ENCODE measurements at regions of chr6 and their contacts with region 1.

Region 1: GRCh38 chr6:17281100-17281494 is at the start of gene RBM24:
- DNase-seq: peak in 1 of 2 donors; percentile 64
- ATAC-seq: peak; percentile 17 to 22
- H3K4me3 ChIP-seq: peak within 1 kb of the TSS; percentile 74 to 94 (median 86)
- H3K27ac ChIP-seq: peak within 1 kb of the TSS; percentile 93 to 100 (median 96)
- H3K4me1 ChIP-seq: peaks cover 26 to 46% of the 10 kb centered on the region in 2 donors
- H3K27me3 ChIP-seq: no peaks in the 10 kb centered on the region
- CTCF ChIP-seq: peak in 2 of 5 experiments; percentile 17 to 18
- POLR2A ChIP-seq: no peak
- total RNA-seq, gene RBM24: 74.9 to 375 (median 185) TPM

Region 2: DNA sequence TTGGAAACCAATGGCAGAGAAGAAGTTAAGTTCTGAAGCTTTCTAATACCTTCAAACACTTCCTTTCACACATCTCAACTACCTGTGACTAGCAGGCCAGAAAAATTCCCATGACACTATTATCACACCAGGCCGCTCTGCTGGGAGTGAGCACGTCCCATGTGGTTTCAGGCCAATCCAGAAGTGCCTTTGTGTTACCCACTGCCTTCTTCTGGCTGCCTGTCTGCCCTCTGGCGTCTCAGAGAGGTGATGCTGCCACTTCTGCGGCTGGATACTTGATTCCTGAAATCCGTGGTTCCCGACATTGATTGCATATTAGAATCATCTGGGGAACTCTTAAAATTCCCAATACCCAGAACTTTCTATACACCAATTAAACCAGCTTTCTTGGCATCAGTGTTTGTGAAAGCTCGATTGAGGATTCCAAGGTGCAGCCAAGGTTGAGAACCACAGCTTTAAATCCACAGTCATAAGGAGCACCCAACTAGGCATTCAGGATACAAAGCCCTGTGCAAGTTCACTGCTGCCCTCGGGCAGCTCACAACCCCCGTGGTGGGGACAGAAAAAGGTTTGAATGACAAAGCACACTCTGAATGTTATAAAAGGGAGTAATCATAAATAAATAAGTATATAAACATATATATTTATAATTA is 113.6 kb before region 1 on chr6:
- in situ Hi-C with region 1: loop called in 1 of 4 experiments (anchors 5 kb)
- intact Hi-C with region 1: loop called (anchors 5 kb)
- DNase-seq: peak; percentile 35 to 81
- ATAC-seq: peak; percentile 43 to 75
- H3K4me3 ChIP-seq: no peak overlapping the region
- H3K27ac ChIP-seq: peak overlapping the region; percentile 80 to 92 (median 90)
- H3K4me1 ChIP-seq: peaks cover 26 to 27% of the 10 kb centered on the region in 2 donors
- H3K27me3 ChIP-seq: no peaks in the 10 kb centered on the region
- CTCF ChIP-seq: peak; percentile 51 to 72 (median 60)
- POLR2A ChIP-seq: peak in 1 of 2 donors; percentile 11

Region 3: GRCh38 chr6:17202526-17202925 is 78.6 kb before region 1 on chr6:
- in situ Hi-C with region 1: no loop called
- intact Hi-C with region 1: loop called (anchors 2 kb)
- DNase-seq: peak; percentile 39 to 79
- ATAC-seq: peak; percentile 97 to 98
- H3K4me3 ChIP-seq: peak overlapping the region in 1 of 4 donors; percentile 6
- H3K27ac ChIP-seq: peak overlapping the region; percentile 87 to 93 (median 90)
- H3K4me1 ChIP-seq: peaks cover 23 to 24% of the 10 kb centered on the region in 2 donors
- H3K27me3 ChIP-seq: no peaks in the 10 kb centered on the region
- CTCF ChIP-seq: no peak
- POLR2A ChIP-seq: peak; percentile 82 to 90

Region 4: DNA sequence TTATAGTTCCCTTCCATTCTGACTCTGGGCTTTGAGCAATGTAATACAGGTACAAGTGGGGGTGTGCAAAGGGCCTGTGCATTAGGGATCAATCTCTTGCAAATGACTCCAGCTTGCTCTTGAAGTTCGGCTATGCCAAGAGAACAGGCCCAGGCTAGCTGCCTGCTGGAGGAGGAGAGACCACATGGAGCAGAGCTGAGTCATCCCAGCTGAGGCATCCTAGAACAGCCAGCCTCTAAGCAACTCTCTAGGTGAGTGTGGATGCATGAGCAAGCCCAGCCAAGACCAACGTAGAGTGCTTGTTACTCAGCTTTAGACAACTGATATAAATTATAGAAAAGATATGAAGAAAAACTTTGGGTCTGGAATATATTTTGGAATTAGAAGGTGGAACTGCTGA is 47.6 kb before region 1 on chr6:
- in situ Hi-C with region 1: no loop called
- intact Hi-C with region 1: no loop called
- DNase-seq: no peak
- ATAC-seq: no peak
- H3K4me3 ChIP-seq: no peak overlapping the region
- H3K27ac ChIP-seq: no peak overlapping the region
- H3K4me1 ChIP-seq: peaks cover 9 to 13% of the 10 kb centered on the region in 2 donors
- H3K27me3 ChIP-seq: no peaks in the 10 kb centered on the region
- CTCF ChIP-seq: no peak
- POLR2A ChIP-seq: no peak

Region 5: GRCh38 chr6:17361013-17361412 is 79.9 kb after region 1 on chr6:
- in situ Hi-C with region 1: no loop called
- intact Hi-C with region 1: no loop called
- DNase-seq: no peak
- ATAC-seq: no peak
- H3K4me3 ChIP-seq: no peak overlapping the region
- H3K27ac ChIP-seq: no peak overlapping the region
- H3K4me1 ChIP-seq: no peaks in the 10 kb centered on the region
- H3K27me3 ChIP-seq: no peaks in the 10 kb centered on the region
- CTCF ChIP-seq: no peak
- POLR2A ChIP-seq: no peak

Region 6: DNA sequence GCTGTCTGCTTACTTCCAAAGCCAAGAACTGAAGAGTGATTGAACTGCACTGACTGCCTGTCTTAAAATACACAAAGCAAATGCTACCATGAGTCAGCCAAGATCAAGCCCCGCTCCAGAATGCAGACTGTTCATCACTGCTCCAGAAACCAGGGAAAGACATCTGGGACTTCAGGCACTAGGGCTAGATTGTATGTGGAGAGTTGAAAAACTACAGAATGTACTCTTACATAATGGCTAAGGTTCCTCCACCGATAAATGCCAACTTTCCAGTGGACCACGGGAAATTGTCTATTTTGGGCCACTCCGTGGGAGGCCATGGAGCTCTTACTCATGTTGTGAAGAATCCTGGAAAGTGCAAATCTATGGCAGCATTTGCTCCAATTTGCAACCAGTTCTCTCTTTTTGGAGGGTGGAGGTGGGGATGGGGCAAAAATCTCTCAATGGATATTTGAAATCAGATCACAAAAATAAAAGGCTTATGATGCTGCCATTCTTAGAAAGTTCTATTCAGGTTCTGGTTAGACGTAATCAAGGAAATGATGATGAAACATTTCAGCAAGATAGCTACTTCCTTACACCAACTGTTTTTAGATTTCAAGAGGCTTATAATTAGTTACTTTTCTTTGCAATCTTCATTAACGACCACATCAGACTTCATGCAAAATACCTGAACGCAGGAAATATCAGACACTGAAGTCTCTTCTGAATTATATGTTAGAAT is 100.5 kb after region 1 on chr6:
- in situ Hi-C with region 1: loop called in 1 of 4 experiments (anchors 10 kb)
- intact Hi-C with region 1: no loop called
- DNase-seq: peak; percentile 56 to 79
- ATAC-seq: peak; percentile 96
- H3K4me3 ChIP-seq: no peak overlapping the region
- H3K27ac ChIP-seq: peak overlapping the region; percentile 85 to 97 (median 88)
- H3K4me1 ChIP-seq: peaks cover 28 to 33% of the 10 kb centered on the region in 2 donors
- H3K27me3 ChIP-seq: no peaks in the 10 kb centered on the region
- CTCF ChIP-seq: no peak
- POLR2A ChIP-seq: no peak

Region 7: DNA sequence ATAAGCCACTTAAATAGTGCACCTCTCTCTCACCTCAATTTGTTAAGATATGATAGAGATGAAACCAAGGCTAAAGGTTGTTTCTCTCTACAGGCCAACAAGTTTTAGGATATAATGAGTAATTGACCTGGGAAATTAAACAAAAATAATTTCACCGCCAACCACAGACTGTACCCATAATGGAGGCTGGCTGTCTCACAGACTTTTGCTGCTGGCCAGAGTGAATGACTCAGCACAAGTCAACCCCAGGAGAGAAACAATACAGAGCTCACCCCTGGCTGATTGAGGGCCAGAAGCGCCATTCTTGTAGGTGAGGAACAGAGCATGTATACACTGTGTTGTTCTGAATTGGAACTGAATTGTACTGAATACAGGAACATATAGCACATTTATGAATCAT is 212.2 kb after region 1 on chr6:
- in situ Hi-C with region 1: loop called in 2 of 4 experiments (anchors 10 to 25 kb)
- intact Hi-C with region 1: no loop called
- DNase-seq: no peak
- ATAC-seq: peak; percentile 17 to 23
- H3K4me3 ChIP-seq: no peak overlapping the region
- H3K27ac ChIP-seq: peak overlapping the region; percentile 93 to 98 (median 95)
- H3K4me1 ChIP-seq: peaks cover 38 to 54% of the 10 kb centered on the region in 2 donors
- H3K27me3 ChIP-seq: no peaks in the 10 kb centered on the region
- CTCF ChIP-seq: no peak
- POLR2A ChIP-seq: no peak

Region 8: DNA sequence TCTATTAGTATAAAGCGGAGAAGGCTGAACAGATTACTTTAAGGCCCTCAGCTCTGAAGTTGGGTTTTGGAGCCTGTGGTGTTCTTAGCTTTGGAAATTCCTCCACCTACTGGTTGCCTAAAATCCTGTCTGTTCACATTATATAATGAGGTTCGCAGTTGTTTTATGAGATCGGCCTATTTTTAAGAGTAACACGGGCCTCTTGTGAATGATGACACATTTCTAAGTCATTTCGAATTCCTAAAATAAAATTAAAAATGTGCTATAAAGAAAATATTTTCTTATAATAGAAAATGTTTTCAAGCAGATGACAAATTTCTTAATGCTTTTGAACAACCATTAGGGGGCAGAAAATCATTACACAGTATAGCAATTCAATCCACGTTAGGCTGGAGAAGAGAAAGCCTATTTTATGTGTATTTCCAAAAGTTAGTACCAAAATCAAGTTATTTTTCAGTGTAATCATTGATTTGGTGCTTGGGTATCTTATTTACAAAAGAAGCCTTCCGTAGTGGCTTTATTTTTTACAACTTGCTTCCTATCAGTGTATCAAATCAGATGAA is 303.2 kb after region 1 on chr6:
- in situ Hi-C with region 1: no loop called
- intact Hi-C with region 1: loop called (anchors 10 kb)
- DNase-seq: peak in 1 of 2 donors; percentile 33
- ATAC-seq: peak; percentile 92 to 93
- H3K4me3 ChIP-seq: peak overlapping the region; percentile 2 to 48 (median 32)
- H3K27ac ChIP-seq: peak overlapping the region; percentile 66 to 85 (median 75)
- H3K4me1 ChIP-seq: peaks cover 7 to 8% of the 10 kb centered on the region in 2 donors
- H3K27me3 ChIP-seq: no peaks in the 10 kb centered on the region
- CTCF ChIP-seq: peak; percentile 78 to 97 (median 86)
- POLR2A ChIP-seq: no peak

Measured in gastrocnemius medialis (tissue), 4 donors.